ENCODE measurements at regions of chr7 and their contacts with region 1.

Region 1: DNA sequence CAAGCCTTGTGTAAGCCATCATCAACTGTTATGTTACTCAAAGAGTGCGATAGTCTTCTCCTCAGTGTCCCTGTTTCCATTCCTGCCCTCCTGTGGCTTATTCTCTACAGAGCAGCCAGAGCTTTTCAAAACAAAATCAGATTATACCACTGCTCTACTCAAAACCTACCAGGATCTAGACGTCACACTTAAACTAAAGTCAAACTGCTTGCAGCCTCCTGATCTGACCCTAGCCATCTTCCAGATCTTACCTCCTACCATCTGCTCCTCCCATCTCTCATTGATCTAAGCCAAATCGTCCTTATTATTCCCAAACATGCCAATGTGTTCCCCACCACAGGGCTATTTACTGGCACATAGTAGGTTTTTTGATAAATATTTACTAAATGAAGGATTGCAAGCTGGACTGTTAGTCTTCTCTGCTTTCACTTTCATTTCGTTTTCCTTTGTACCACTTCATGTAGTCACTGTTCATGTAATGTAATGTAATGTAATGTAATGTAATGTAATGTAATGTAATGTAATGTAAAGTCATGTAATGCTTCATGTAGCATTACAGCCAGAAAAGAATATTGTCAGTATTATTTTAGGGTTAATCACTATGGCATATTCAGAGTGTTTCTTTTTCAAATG is 116.1 kb downstream of the GPR37 start:
- DNase-seq: no peak
- ATAC-seq: no peak
- H3K4me3 ChIP-seq: no peak overlapping the region
- H3K27ac ChIP-seq: no peak overlapping the region
- H3K4me1 ChIP-seq: peaks cover 3% of the 10 kb centered on the region; the same call in 1 of the 2 replicates
- H3K27me3 ChIP-seq: no peaks in the 10 kb centered on the region
- CTCF ChIP-seq: no peak

Region 2: DNA sequence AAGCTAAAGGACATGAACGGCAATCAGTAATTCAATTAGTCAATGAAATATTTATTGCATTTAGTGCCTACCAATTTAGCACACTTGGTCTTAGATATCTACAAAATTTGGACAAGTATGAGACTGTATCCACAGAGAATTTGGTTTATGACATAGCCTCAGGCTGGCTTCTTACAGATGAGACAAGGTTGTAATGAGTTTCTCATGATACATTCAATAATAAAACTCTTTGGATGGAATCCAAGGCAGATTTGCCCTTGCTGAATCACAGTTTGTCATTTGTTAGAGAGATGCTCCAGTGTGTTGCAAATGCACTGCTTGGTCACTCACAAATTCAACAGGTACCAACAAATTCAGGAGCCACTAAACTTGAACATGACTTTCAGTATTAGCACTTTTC is 46.4 kb before region 1 on chr7:
- CTCF ChIA-PET with region 1: no interaction called
- POLR2A ChIA-PET with region 1: no interaction called
- intact Hi-C with region 1: loop called (anchors 5 kb)
- DNase-seq: peak; percentile 97
- ATAC-seq: peak; percentile 98
- H3K4me3 ChIP-seq: no peak overlapping the region
- H3K27ac ChIP-seq: peak overlapping the region; percentile 59
- H3K4me1 ChIP-seq: peaks cover 12% of the 10 kb centered on the region
- H3K27me3 ChIP-seq: no peaks in the 10 kb centered on the region
- CTCF ChIP-seq: no peak

Region 3: DNA sequence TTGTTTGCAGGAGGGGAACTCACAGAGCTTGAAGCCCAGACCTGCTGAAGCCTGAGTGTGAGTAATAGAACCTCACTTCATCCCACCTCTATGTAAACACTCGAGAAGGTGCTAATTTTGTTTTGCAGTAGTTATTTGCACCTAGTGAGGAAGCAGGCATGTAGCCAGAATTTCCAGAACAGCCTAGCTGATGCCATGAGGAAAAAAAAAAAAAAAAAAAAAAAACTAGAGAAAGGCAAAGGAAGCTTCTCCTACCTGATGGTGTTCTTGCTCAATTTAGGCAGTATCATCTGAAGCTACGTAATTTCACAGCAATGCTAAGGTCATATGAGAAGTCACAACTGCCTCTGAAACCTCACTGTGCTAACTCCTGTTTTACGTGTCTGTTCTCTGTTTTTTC is 129.7 kb after region 1 on chr7:
- CTCF ChIA-PET with region 1: no interaction called
- POLR2A ChIA-PET with region 1: no interaction called
- intact Hi-C with region 1: no loop called
- DNase-seq: no peak
- ATAC-seq: no peak
- H3K4me3 ChIP-seq: no peak overlapping the region
- H3K27ac ChIP-seq: no peak overlapping the region
- H3K4me1 ChIP-seq: peaks cover 14% of the 10 kb centered on the region
- H3K27me3 ChIP-seq: no peaks in the 10 kb centered on the region
- CTCF ChIP-seq: no peak